ENCODE measurements at regions of chr11 and their contacts with region 1.

Region 1: DNA sequence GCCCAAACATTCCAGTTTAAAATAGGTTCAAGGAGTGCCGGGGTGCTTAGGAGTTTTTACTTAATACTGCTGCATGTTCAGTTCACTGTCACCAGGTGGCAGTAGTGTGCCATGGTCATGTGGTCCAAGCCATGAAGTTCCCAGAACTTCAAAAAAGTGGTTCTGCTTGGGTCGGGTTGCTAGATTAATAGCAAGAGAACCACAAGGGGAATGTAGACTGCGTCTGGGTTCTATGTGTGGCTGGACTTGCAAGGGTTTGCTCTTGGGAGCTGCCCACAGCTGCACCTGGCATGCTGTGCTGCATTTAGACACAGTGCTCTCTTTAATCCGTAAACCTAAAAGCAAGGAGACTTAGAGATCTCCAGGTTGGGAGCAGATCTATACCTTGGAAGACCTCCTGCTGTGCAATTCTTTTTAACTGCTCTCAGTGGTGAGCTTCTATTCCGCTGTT is 6.5 kb upstream of the SPON1 start:
- DNase-seq: peak; percentile 71
- ATAC-seq: peak; percentile 88
- H3K4me3 ChIP-seq: no peak overlapping the region
- H3K27ac ChIP-seq: no peak overlapping the region
- H3K4me1 ChIP-seq: no peaks in the 10 kb centered on the region
- H3K27me3 ChIP-seq: peaks cover 53% of the 10 kb centered on the region
- CTCF ChIP-seq: peak; percentile 88
- POLR2A ChIP-seq: no peak
- RAD21 ChIP-seq: peak; percentile 94

Region 2: DNA sequence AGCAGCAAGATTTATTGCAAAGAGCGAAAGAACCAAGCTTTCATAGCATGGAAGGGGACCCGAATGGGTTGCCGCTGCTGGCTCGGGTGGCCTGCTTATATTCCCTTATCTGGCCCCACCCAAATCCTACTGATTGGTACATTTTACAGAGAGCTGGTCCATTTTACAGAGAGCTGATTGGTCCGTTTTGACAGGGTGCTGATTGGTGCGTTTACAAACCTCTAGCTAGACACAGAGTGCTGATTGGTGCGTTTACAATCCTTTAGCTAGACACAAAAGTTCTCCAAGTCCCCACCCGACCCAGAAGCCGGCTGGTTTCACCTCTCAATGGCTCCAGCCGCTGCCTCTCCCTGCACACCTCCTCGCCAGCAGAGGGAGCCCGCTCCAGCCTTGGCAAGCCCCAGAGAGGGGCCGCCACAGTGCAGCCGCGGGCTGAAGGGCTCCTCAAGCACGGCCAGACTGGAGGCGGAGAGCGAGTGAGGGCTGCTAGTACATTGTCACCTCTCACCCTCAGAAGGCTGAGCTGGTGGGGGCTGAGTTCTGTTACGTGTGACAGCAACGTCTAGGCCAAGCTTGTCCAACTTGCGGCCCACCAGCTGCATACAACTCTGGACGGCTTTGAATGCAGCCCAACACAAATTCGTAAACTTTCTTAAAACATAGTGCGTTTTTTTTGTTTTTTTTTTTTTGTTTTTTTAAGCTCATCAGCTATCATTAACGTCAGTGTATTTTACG is 468.9 kb before region 1 on chr11:
- CTCF ChIA-PET with region 1: no interaction called
- POLR2A ChIA-PET with region 1: no interaction called
- dilution Hi-C with region 1: no loop called
- in situ Hi-C with region 1: no loop called
- intact Hi-C with region 1: loop called (anchors 2 kb)
- DNase-seq: no peak
- ATAC-seq: peak; percentile 82
- H3K4me3 ChIP-seq: peak overlapping the region; percentile 27; the same call in 1 of the 2 replicates
- H3K27ac ChIP-seq: no peak overlapping the region
- H3K4me1 ChIP-seq: no peaks in the 10 kb centered on the region
- H3K27me3 ChIP-seq: no peaks in the 10 kb centered on the region
- CTCF ChIP-seq: peak; percentile 29
- POLR2A ChIP-seq: no peak
- RAD21 ChIP-seq: no peak

Region 3: GRCh38 chr11:13745165-13745564 is 210.8 kb before region 1 on chr11:
- CTCF ChIA-PET with region 1: no interaction called
- POLR2A ChIA-PET with region 1: no interaction called
- dilution Hi-C with region 1: no loop called
- in situ Hi-C with region 1: no loop called
- intact Hi-C with region 1: no loop called
- DNase-seq: peak; percentile 2
- ATAC-seq: no peak
- H3K4me3 ChIP-seq: no peak overlapping the region
- H3K27ac ChIP-seq: no peak overlapping the region
- H3K4me1 ChIP-seq: no peaks in the 10 kb centered on the region
- H3K27me3 ChIP-seq: peaks cover 4% of the 10 kb centered on the region
- CTCF ChIP-seq: no peak
- POLR2A ChIP-seq: no peak
- RAD21 ChIP-seq: no peak

Region 4: DNA sequence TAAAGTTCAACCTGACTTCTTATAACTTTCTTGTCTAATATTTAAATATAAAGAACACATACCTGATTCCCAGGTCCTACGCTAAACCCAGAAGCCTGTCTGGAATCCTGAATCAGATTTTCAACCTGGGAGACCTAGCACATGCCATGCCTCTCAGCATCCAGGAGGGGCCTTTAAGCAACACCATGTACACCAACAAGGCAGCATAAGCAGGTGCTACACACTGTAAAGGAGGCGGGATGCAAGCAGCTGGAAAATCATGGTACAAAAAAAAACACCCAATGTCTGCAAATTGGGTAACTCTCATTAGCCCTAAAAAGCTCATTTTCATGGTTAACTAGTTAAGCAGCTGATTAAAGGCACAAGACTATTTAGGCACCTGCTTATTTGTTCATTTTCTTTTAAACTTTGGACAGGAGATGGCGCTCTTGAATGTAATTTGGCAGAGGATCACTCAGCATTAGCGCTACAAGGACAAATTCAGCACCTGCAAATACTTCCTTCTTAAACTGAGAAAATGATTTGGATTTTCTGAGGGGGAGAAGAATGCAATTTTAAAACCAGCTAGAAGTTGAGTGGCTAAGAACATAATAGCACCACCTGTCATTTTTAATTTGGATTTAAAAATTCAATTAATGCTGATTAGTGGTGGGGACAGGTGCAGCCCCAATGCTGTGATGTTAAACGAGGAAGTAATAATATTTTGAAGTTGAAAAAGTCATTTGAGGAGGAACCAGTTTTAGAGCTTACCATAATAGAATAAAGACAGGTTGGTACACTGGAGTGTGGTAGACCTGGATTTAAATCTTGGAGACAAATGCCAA is 183.6 kb before region 1 on chr11:
- CTCF ChIA-PET with region 1: no interaction called
- POLR2A ChIA-PET with region 1: no interaction called
- dilution Hi-C with region 1: no loop called
- in situ Hi-C with region 1: no loop called
- intact Hi-C with region 1: loop called (anchors 5 kb)
- DNase-seq: peak; percentile 62
- ATAC-seq: no peak; the same call in 1 of the 2 replicates
- H3K4me3 ChIP-seq: no peak overlapping the region
- H3K27ac ChIP-seq: no peak overlapping the region
- H3K4me1 ChIP-seq: no peaks in the 10 kb centered on the region
- H3K27me3 ChIP-seq: peaks cover 7% of the 10 kb centered on the region
- CTCF ChIP-seq: peak; percentile 54
- POLR2A ChIP-seq: no peak
- RAD21 ChIP-seq: peak; percentile 57

Region 5: DNA sequence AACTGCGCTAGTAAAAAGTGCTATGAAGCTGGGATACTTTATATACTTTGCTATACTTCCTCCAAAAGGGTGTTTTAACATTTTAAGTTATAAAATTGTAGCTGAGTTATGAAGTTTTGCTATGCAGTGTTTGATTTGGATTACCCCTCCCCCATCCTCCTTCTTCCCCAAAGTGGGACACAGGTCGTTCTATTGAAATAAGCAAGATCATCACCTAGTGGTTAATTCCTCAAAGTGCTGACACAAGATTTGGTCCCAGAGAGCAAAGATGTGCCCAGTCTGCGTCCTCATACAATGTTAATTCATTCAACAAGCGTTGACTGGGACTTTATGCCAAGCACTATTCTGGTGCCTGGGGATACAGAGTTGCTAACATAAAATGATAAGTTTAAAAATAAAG is 85.0 kb after region 1 on chr11:
- CTCF ChIA-PET with region 1: interaction called, 3 read pairs
- POLR2A ChIA-PET with region 1: no interaction called
- dilution Hi-C with region 1: no loop called
- in situ Hi-C with region 1: no loop called
- intact Hi-C with region 1: loop called (anchors 1 kb)
- DNase-seq: peak; percentile 22
- ATAC-seq: 0 out of 2 replicates have a peak, but pooled peaks have one; percentile 59
- H3K4me3 ChIP-seq: no peak overlapping the region
- H3K27ac ChIP-seq: no peak overlapping the region
- H3K4me1 ChIP-seq: no peaks in the 10 kb centered on the region
- H3K27me3 ChIP-seq: peaks cover 11% of the 10 kb centered on the region
- CTCF ChIP-seq: peak; percentile 50
- POLR2A ChIP-seq: no peak
- RAD21 ChIP-seq: peak; percentile 68

Region 6: GRCh38 chr11:14249121-14249963 is 293.3 kb after region 1 on chr11:
- CTCF ChIA-PET with region 1: no interaction called
- POLR2A ChIA-PET with region 1: no interaction called
- dilution Hi-C with region 1: no loop called
- in situ Hi-C with region 1: loop called (anchors 5 kb)
- intact Hi-C with region 1: loop called (anchors 1 kb)
- DNase-seq: peak; percentile 53
- ATAC-seq: peak; percentile 56
- H3K4me3 ChIP-seq: no peak overlapping the region
- H3K27ac ChIP-seq: no peak overlapping the region
- H3K4me1 ChIP-seq: peaks cover 2% of the 10 kb centered on the region; the same call in 1 of the 2 replicates
- H3K27me3 ChIP-seq: peaks cover 49% of the 10 kb centered on the region
- CTCF ChIP-seq: peak; percentile 92
- POLR2A ChIP-seq: 0 out of 2 replicates have a peak, but pooled peaks have one; percentile 23
- RAD21 ChIP-seq: peak; percentile 95

Measured in IMR-90 (cell line).